ENCODE measurements at regions of chr10 and their contacts with region 1.

Region 1: DNA sequence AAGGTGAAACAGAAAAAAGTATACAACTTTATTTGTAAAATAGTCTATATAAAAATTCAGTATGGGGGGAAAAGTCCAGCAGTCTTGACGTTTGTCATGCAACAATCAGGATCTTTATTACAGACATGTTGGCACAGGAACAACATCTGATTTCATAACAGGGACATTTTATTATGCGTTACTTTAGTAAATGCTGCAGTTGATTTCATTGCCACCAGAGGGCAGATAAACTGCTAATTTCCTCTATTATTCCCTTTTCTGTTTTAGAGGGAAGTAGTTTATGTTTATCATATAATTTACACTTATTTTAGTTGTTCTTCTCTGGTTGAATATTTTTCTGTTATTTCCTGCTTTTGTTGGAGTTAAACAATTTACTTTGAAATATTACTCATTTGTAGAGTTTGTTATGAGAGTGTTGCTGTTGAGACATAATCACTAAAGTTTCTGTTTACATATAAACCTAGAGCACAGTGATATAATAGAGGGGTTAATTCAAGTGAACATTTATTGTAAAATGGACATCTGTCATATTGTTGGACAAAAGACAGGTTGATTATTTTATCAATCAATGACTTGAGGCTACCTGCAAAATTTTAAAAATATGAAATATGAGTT is 3.3 kb downstream of the PLXDC2 start:
- DNase-seq: peak in 1 of 2 donors; percentile 78
- ATAC-seq: no peak
- H3K4me3 ChIP-seq: peak overlapping the region in 8 of 10 donors; percentile 59 to 94 (median 84)
- H3K27ac ChIP-seq: peak overlapping the region in 7 of 10 donors; percentile 2 to 95 (median 53)
- H3K4me1 ChIP-seq: peaks cover 0 to 50% (median 19%) of the 10 kb centered on the region in 9 donors
- H3K27me3 ChIP-seq: peaks cover 0 to 16% (median 2%) of the 10 kb centered on the region in 7 donors
- CTCF ChIP-seq: peak; percentile 75 to 94 (median 85)

Region 2: DNA sequence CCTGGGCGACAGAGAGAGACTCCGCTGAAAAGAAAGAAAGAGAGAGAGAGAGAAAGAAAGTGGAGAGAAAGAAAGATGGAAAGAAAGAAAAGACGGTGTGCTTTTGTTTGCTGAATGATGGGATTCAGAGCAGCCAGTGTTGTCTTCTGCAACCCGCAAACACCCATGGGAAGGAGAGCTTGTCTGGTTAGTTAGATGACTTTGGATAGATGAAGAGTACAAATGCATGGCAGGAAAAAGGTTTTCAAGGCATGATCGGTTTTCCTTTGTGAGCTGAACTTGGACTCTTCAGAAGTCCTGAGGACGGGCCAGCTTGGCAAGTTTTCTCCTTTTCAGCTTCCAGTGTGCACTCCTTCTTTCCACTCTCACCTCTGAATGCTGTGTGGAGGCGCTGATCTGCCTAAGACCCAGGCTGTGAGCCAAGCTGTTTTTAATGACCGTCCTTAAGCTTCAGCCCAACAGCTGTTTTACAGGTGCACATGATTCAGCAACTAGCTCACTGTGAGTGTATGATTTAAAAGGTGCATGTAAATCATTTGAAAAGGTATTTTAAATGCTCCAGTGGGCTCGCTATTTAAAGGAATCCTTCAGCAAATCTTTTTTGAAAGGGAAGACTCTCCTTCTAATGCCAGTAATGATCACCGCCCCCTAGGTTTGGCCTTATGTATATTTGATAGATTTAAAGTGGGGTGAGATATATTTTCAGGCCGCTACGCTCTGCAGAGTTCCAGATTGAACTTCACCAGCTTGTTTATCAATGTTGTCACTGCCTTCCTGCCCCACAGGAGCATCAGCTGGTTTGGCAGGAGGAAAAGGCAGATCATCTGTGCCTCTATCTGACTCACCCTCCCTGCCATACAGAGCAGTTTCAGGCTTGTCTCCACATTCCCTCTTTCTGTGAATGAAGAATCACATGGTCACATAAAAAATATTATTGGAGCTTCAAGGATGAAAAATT is 111.7 kb after region 1 on chr10:
- intact Hi-C with region 1: loop called in 3 of 10 experiments (anchors 5 to 10 kb)
- DNase-seq: no peak
- ATAC-seq: peak; percentile 60 to 87 (median 74)
- H3K4me3 ChIP-seq: no peak overlapping the region
- H3K27ac ChIP-seq: peak overlapping the region; percentile 49 to 81 (median 62)
- H3K4me1 ChIP-seq: peaks cover 0 to 48% (median 34%) of the 10 kb centered on the region in 9 donors
- H3K27me3 ChIP-seq: no peaks in the 10 kb centered on the region
- CTCF ChIP-seq: no peak

Region 3: DNA sequence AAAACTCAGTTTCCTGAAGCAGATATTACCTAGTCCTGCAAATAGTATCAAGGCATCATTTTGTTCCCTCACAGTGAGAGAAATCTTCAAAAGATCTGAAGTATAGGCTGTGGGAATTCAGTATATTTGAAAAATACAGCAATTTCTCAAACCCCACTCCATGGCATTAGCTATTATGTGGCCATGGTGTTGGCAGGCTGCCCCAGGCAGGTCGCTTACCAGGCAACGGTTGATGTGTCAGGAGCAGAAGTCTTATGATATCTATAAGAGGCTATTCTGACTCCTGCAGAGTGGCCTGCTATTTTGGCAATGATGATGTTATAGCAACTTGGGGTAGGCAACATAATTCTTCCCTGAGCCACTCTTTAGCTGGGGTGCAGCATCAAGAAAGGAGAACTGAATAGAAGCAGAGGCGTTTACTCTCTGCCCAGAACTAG is 184.6 kb after region 1 on chr10:
- intact Hi-C with region 1: loop called in 3 of 10 experiments (anchors 5 to 10 kb)
- DNase-seq: peak; percentile 36 to 57
- ATAC-seq: peak; percentile 31 to 85 (median 56)
- H3K4me3 ChIP-seq: peak overlapping the region in 1 of 10 donors; percentile 12
- H3K27ac ChIP-seq: peak overlapping the region; percentile 59 to 93 (median 76)
- H3K4me1 ChIP-seq: peaks cover 4 to 75% (median 38%) of the 10 kb centered on the region in 9 donors
- H3K27me3 ChIP-seq: no peaks in the 10 kb centered on the region
- CTCF ChIP-seq: no peak

Region 4: GRCh38 chr10:20085115-20085514 is 265.6 kb after region 1 on chr10:
- intact Hi-C with region 1: loop called in 3 of 10 experiments (anchors 5 to 10 kb)
- DNase-seq: no peak
- ATAC-seq: peak in 4 of 8 donors; percentile 34 to 57 (median 43)
- H3K4me3 ChIP-seq: no peak overlapping the region
- H3K27ac ChIP-seq: peak overlapping the region in 1 of 10 donors; percentile 43
- H3K4me1 ChIP-seq: peaks cover 0 to 36% (median 8%) of the 10 kb centered on the region in 9 donors
- H3K27me3 ChIP-seq: no peaks in the 10 kb centered on the region
- CTCF ChIP-seq: no peak

Region 5: GRCh38 chr10:20100171-20100570 is 280.6 kb after region 1 on chr10:
- intact Hi-C with region 1: loop called in 2 of 10 experiments (anchors 5 to 10 kb)
- DNase-seq: peak in 1 of 2 donors; percentile 11
- ATAC-seq: peak in 7 of 8 donors; percentile 69 to 93 (median 87)
- H3K4me3 ChIP-seq: peak overlapping the region in 2 of 10 donors; percentile 1 to 20
- H3K27ac ChIP-seq: peak overlapping the region in 9 of 10 donors; percentile 49 to 80 (median 66)
- H3K4me1 ChIP-seq: peaks cover 0 to 42% (median 23%) of the 10 kb centered on the region in 9 donors
- H3K27me3 ChIP-seq: no peaks in the 10 kb centered on the region
- CTCF ChIP-seq: no peak

Region 6: GRCh38 chr10:20622531-20623232 is 803.2 kb after region 1 on chr10:
- intact Hi-C with region 1: loop called in 3 of 10 experiments (anchors 10 kb)
- DNase-seq: no peak
- ATAC-seq: peak in 2 of 8 donors; percentile 32 to 35
- H3K4me3 ChIP-seq: no peak overlapping the region
- H3K27ac ChIP-seq: peak overlapping the region in 8 of 10 donors; percentile 17 to 69 (median 60)
- H3K4me1 ChIP-seq: peaks cover 0 to 34% (median 5%) of the 10 kb centered on the region in 9 donors
- H3K27me3 ChIP-seq: no peaks in the 10 kb centered on the region
- CTCF ChIP-seq: no peak

Measured in heart right ventricle (tissue), 16 donors.